Activated CD4-positive, alpha-beta T cell treated with anti-CD3 and anti-CD28 coated beads, Interleukin-2, amount 10 ng/mL, durations not matched to agents 24 days and 14 days (primary cell): ENCODE measurements at regions of chr4 and their contacts with region 1.

Region 1: DNA sequence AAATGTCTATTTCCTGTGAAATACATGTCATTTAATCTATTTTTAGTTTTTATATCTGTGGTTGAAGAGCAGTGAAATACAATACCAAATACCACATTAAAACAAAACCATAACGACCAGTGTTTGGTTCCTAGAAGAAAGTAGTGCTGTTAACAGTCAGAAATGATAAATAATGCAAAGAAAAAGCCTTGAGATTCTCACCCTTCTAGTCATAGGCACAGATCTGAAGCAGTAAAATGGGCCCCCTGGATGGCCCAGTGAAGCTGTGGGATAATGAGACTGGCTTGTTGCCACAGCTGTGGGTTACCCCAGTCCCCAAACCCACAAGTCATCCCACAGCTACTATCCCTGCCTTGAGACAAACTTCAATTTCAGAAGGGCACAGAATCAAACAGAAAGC is 137.3 kb upstream of the RPL34 start:
- DNase-seq: peak; percentile 82
- H3K4me3 Mint-ChIP-seq: peak overlapping the region; percentile 82
- H3K27ac Mint-ChIP-seq: peak overlapping the region; percentile 85
- H3K4me1 Mint-ChIP-seq: peaks cover 32% of the 10 kb centered on the region
- H3K27me3 Mint-ChIP-seq: no peaks in the 10 kb centered on the region

Region 2: DNA sequence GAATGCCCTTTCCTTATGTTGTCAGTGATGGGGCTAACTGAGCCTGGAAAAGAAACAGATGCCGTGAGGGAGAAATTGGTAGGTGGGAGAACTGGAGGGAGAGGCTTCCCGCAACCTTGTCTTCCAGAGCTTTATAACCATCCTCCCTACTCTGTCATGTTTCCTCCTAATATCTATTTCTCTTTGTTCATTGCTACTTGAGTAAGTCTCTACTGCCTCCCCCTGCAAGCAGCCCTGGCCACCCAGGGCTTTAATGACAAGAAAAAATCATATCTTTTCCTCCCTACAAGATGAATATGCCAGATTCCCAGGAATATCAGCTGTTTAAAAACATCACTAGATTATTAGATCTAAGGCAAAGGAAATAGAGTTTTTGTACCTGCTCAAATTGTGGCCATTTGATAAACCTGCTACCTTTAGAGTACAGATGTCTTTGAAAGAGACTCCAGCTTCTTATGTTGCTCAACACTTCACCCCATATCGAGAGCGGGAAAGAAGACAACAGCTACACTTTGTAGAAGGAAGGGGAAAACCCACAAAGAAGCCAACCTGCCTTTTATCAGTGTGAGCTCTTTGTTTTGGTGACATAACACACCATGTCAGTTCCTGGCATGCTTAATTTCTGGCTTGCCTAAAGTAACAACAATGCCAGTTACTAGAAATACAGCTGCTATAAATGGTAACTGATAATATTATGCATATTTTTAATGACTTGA is 127.7 kb before region 1 on chr4:
- intact Hi-C with region 1: loop called (anchors 5 kb)
- DNase-seq: peak; percentile 88
- H3K4me3 Mint-ChIP-seq: peak overlapping the region; percentile 71
- H3K27ac Mint-ChIP-seq: peak overlapping the region; percentile 26
- H3K4me1 Mint-ChIP-seq: peaks cover 49% of the 10 kb centered on the region
- H3K27me3 Mint-ChIP-seq: no peaks in the 10 kb centered on the region

Region 3: GRCh38 chr4:108466936-108467902 is 15.9 kb before region 1 on chr4:
- intact Hi-C with region 1: loop called (anchors 2 kb)
- DNase-seq: peak; percentile 83
- H3K4me3 Mint-ChIP-seq: peak overlapping the region; percentile 64
- H3K27ac Mint-ChIP-seq: peak overlapping the region; percentile 88
- H3K4me1 Mint-ChIP-seq: peaks cover 27% of the 10 kb centered on the region
- H3K27me3 Mint-ChIP-seq: no peaks in the 10 kb centered on the region

Region 4: DNA sequence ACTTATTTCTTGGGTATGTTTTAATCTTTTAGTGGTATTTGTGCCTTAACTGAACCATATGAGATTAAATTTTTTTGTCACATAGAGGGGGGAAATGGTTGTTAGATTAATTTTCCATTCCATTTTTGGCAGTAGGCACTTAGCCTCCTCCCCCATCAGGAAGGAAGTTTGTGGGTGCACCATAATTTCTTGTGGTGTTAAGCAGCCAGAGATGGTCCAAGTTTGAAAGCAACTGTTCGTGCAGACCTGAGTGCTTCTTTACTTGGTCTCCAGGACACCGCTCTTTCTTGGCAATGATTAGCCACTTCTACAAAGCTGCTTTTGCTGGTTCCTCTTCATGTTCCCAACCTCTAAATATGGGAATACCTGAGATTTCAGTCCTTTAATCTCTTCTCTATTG is 44.6 kb after region 1 on chr4:
- intact Hi-C with region 1: no loop called
- DNase-seq: peak; percentile 86
- H3K4me3 Mint-ChIP-seq: peak overlapping the region; percentile 50
- H3K27ac Mint-ChIP-seq: peak overlapping the region; percentile 66
- H3K4me1 Mint-ChIP-seq: peaks cover 57% of the 10 kb centered on the region
- H3K27me3 Mint-ChIP-seq: no peaks in the 10 kb centered on the region